Activated CD4-positive, alpha-beta memory T cell treated with anti-CD3 and anti-CD28 coated beads for 36 hours (primary cell): ENCODE measurements at regions of chr13 and their contacts with region 1.

Region 1: DNA sequence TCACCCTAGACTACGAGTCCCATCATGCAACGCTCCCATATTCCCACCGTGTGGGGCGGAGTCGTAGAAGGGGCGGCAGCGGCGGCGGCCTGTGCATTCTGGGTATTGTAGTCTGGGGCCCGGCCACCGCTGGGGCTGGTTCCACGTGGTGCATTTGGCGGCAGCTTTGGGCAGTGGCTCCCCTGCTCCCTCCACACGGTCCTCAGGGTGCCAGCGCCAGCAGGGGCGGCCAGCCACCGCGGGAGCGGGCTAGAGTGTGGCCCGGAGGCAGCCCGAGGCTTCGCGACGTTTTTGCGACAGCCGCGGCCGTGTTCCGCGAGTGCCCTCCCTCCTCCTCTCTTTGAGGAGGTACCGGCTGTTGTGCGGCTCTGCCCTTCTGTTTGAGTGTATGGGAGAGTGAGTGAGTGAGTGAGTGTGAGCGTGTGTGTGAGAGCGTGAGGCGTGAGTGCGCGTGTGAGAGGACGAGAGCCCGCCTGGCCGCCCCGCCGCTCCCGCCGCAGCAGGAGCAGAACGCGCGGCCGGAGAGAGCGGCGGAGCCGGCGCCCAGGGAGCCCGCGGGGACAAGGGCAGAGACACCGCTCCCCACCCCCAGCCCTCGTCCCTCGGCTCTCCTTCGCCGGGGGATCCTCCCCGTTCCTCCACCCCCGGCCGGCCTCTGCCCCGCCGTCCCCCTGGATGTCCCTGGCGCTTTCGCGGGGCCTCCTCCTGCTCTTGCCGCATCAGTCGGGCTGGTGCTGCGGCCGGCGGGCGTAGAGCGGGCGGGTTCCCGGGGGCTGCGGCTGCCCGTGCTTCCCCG is at the start of gene CDK8:
- DNase-seq: peak; percentile 91
- H3K4me3 Mint-ChIP-seq: peak within 1 kb of the TSS; percentile 84
- H3K27ac Mint-ChIP-seq: peak within 1 kb of the TSS; percentile 67
- H3K4me1 Mint-ChIP-seq: peaks cover 37% of the 10 kb centered on the region
- H3K27me3 Mint-ChIP-seq: no peaks in the 10 kb centered on the region
- total RNA-seq, gene CDK8: 14.6 to 15.0 TPM

Region 2: GRCh38 chr13:26112843-26113242 is 141.1 kb before region 1 on chr13:
- CTCF ChIA-PET with region 1: no interaction called
- POLR2A ChIA-PET with region 1: no interaction called
- intact Hi-C with region 1: no loop called
- DNase-seq: no peak
- H3K4me3 Mint-ChIP-seq: no peak overlapping the region
- H3K27ac Mint-ChIP-seq: no peak overlapping the region
- H3K4me1 Mint-ChIP-seq: no peaks in the 10 kb centered on the region
- H3K27me3 Mint-ChIP-seq: peaks cover 6% of the 10 kb centered on the region

Region 3: GRCh38 chr13:26202365-26202972 is 51.5 kb before region 1 on chr13:
- CTCF ChIA-PET with region 1: no interaction called
- POLR2A ChIA-PET with region 1: no interaction called
- intact Hi-C with region 1: no loop called
- DNase-seq: no peak
- H3K4me3 Mint-ChIP-seq: no peak overlapping the region
- H3K27ac Mint-ChIP-seq: no peak overlapping the region
- H3K4me1 Mint-ChIP-seq: no peaks in the 10 kb centered on the region
- H3K27me3 Mint-ChIP-seq: no peaks in the 10 kb centered on the region

Region 4: DNA sequence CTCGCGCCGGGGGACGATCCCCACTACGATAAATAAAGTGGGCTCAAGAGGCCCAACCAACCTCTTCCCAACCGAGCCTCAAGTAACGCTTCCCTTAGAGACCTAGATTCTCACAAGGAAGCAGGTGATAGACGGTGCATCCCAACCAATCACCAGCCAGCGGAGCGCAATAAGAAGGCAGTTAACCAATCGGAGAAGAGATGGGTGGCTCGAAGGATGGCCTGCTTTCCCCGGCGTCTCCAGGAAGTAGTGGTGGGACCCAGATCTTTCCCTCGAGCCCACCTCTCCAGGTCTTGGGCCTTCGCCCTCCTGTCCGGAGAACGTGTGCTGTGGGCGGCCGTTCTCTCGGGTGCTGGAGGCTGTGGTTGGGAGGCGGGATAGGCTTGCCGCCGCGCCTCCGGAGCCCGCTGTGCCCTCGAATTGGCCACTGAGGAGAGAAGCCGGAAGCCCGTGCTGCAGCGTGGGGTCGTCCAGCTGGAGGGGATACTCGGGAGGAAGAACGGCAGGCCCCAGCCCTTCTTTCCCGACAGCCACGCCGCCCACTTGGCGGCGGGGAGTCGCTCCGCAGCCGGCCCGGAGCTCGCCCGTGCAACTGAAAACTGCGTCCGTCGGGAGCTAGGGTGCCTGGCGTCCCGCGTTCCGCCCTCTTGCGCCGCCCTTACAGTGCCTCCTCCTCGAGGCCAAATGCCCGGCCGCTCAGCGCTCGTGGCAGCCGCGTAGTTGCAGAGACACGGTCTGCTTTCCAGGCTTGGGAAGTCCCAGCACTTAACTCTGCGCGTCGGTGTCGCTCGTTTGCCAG is 32.1 kb before region 1 on chr13 and contains the start of gene RNF6:
- CTCF ChIA-PET with region 1: interaction called, 5 read pairs
- POLR2A ChIA-PET with region 1: interaction called, 7 read pairs
- intact Hi-C with region 1: loop called (anchors 1 kb)
- DNase-seq: peak; percentile 92
- H3K4me3 Mint-ChIP-seq: peak within 1 kb of the TSS; percentile 94
- H3K27ac Mint-ChIP-seq: peak within 1 kb of the TSS; percentile 100
- H3K4me1 Mint-ChIP-seq: peaks cover 32% of the 10 kb centered on the region
- H3K27me3 Mint-ChIP-seq: no peaks in the 10 kb centered on the region
- total RNA-seq, gene RNF6: 40.7 to 45.0 TPM